CD4-positive, alpha-beta T cell (primary cell): ENCODE measurements at regions of chr20 and their contacts with region 1.

Region 1: GRCh38 chr20:3888622-3889488 is at the start of gene PANK2:
- DNase-seq: peak; percentile 93 to 99 (median 96)
- ATAC-seq: peak; percentile 95
- H3K4me3 ChIP-seq: peak within 1 kb of the TSS; percentile 90
- H3K4me3 Mint-ChIP-seq: peak within 1 kb of the TSS; percentile 98
- H3K27ac ChIP-seq: peak within 1 kb of the TSS; percentile 80 to 85
- H3K27ac Mint-ChIP-seq: peak within 1 kb of the TSS; percentile 94
- H3K4me1 ChIP-seq: peaks cover 38% of the 10 kb centered on the region
- H3K4me1 Mint-ChIP-seq: peaks cover 67% of the 10 kb centered on the region
- H3K27me3 ChIP-seq: no peaks in the 10 kb centered on the region
- H3K27me3 Mint-ChIP-seq: no peaks in the 10 kb centered on the region
- CTCF ChIP-seq: no peak
- total RNA-seq, gene PANK2: 49.0 to 51.1 TPM

Region 2: GRCh38 chr20:3820048-3820900 is 68.6 kb before region 1 on chr20 and contains the start of gene AP5S1:
- CTCF ChIA-PET with region 1: interaction called, 4 read pairs
- POLR2A ChIA-PET with region 1: no interaction called
- intact Hi-C with region 1: loop called in 1 of 2 experiments (anchors 2 kb)
- DNase-seq: peak; percentile 71 to 95 (median 84)
- ATAC-seq: peak; percentile 84
- H3K4me3 ChIP-seq: peak within 1 kb of the TSS; percentile 92
- H3K4me3 Mint-ChIP-seq: peak within 1 kb of the TSS; percentile 94
- H3K27ac ChIP-seq: peak within 1 kb of the TSS; percentile 93 to 99
- H3K27ac Mint-ChIP-seq: peak within 1 kb of the TSS; percentile 99
- H3K4me1 ChIP-seq: peaks cover 54% of the 10 kb centered on the region
- H3K4me1 Mint-ChIP-seq: peaks cover 48% of the 10 kb centered on the region
- H3K27me3 ChIP-seq: no peaks in the 10 kb centered on the region
- H3K27me3 Mint-ChIP-seq: no peaks in the 10 kb centered on the region
- CTCF ChIP-seq: peak; percentile 89
- total RNA-seq, gene AP5S1: 6.0 TPM

Region 3: DNA sequence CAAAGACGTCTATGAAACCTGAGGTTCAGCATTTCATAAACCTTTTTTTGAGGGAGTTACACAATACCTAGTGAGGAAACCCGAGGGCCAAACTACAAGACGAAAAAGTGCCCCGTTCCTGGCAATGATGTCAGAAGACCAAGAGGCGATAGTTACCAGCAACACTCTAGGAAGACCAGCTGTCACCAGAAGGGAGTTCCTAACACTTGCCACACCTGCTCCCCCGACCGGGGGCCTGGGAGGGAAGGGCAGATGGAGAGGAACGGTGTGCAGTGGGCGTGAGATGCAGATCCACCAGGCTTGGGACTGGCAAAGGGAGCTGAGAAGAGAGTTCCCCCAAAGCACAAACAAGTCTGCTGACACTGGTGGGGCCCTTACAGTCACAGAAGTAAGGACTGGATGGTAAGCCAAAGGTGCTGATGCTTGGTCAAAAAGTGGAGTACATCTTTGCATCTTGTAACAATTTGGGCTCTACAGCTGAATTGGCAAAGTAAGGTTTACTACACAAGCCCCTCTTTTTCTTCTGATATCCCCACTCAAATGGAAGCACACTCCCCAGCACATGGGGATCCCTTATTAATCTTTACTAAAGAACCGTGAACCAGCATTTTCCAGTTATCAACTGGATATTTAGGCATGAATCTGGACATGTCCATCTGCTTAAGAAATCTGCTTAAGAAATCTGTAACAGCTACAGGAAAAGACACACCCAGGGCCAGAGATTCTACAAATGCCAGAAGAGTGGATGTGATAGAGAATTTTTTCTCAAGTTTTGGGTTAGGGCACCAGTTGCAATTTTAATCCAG is 38.8 kb after region 1 on chr20:
- CTCF ChIA-PET with region 1: no interaction called
- POLR2A ChIA-PET with region 1: no interaction called
- intact Hi-C with region 1: loop called in 1 of 2 experiments (anchors 2 kb)
- DNase-seq: peak in 2 of 14 experiments; percentile 32 to 34
- ATAC-seq: no peak
- H3K4me3 ChIP-seq: no peak overlapping the region
- H3K4me3 Mint-ChIP-seq: no peak overlapping the region
- H3K27ac ChIP-seq: peak overlapping the region in 1 of 2 donors; percentile 17
- H3K27ac Mint-ChIP-seq: peak overlapping the region; percentile 61
- H3K4me1 ChIP-seq: peaks cover 23% of the 10 kb centered on the region
- H3K4me1 Mint-ChIP-seq: peaks cover 63% of the 10 kb centered on the region
- H3K27me3 ChIP-seq: no peaks in the 10 kb centered on the region
- H3K27me3 Mint-ChIP-seq: no peaks in the 10 kb centered on the region
- CTCF ChIP-seq: no peak

Region 4: GRCh38 chr20:4038047-4038459 is 149.2 kb after region 1 on chr20:
- CTCF ChIA-PET with region 1: no interaction called
- POLR2A ChIA-PET with region 1: no interaction called
- intact Hi-C with region 1: loop called in 1 of 2 experiments (anchors 2 kb)
- DNase-seq: peak; percentile 67 to 96 (median 78)
- ATAC-seq: peak; percentile 100
- H3K4me3 ChIP-seq: peak overlapping the region; percentile 29
- H3K4me3 Mint-ChIP-seq: peak overlapping the region; percentile 74
- H3K27ac ChIP-seq: peak overlapping the region; percentile 37 to 66
- H3K27ac Mint-ChIP-seq: peak overlapping the region; percentile 86
- H3K4me1 ChIP-seq: peaks cover 25% of the 10 kb centered on the region
- H3K4me1 Mint-ChIP-seq: peaks cover 17% of the 10 kb centered on the region
- H3K27me3 ChIP-seq: no peaks in the 10 kb centered on the region
- H3K27me3 Mint-ChIP-seq: no peaks in the 10 kb centered on the region
- CTCF ChIP-seq: no peak

Region 5: GRCh38 chr20:4171538-4172116 is 282.8 kb after region 1 on chr20:
- CTCF ChIA-PET with region 1: no interaction called
- POLR2A ChIA-PET with region 1: no interaction called
- intact Hi-C with region 1: loop called in 1 of 2 experiments (anchors 2 kb)
- DNase-seq: peak in 3 of 14 experiments; percentile 6 to 20 (median 19)
- ATAC-seq: no peak
- H3K4me3 ChIP-seq: peak overlapping the region; percentile 69
- H3K4me3 Mint-ChIP-seq: peak overlapping the region; percentile 76
- H3K27ac ChIP-seq: peak overlapping the region in 1 of 2 donors; percentile 34
- H3K27ac Mint-ChIP-seq: peak overlapping the region; percentile 70
- H3K4me1 ChIP-seq: peaks cover 21% of the 10 kb centered on the region
- H3K4me1 Mint-ChIP-seq: peaks cover 29% of the 10 kb centered on the region
- H3K27me3 ChIP-seq: no peaks in the 10 kb centered on the region
- H3K27me3 Mint-ChIP-seq: no peaks in the 10 kb centered on the region
- CTCF ChIP-seq: no peak

Region 6: DNA sequence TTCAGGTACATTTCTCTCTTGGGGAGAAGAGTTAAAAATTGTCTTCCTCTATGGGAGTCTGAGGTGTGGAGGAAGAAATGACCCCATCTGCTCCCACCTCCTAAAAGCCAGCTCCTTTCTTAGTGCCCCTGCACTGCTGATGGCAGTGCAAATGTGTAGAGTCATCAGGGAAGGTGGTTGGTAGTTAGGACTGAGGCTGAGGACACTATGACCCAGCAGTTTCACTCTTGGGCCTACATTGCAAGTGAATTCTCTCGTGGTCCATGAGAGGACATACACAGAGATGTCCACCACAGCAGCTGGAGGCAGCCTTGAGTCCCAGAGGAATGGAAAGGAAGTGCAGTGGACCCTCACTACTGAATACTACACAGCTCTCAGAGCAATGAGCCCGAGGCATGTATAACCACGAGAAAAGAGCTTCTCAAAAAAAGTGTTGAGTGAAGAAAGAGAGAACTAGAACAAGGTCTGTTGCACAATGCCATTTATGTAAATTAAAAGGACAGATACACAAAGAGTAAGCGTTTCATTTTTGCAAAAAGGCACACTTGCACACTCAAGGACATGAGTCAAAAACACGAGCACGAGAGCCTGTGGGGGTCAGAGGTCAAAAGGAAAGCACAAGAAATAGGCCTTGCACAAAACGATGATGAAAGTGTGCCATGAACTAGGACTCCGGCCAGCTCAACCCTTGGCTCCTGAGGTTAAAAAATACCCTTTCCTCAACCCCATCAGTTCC is 524.6 kb after region 1 on chr20:
- CTCF ChIA-PET with region 1: no interaction called
- POLR2A ChIA-PET with region 1: no interaction called
- intact Hi-C with region 1: no loop called
- DNase-seq: peak in 2 of 14 experiments; percentile 45 to 50
- ATAC-seq: no peak
- H3K4me3 ChIP-seq: no peak overlapping the region
- H3K4me3 Mint-ChIP-seq: no peak overlapping the region
- H3K27ac ChIP-seq: no peak overlapping the region
- H3K27ac Mint-ChIP-seq: no peak overlapping the region
- H3K4me1 ChIP-seq: no peaks in the 10 kb centered on the region
- H3K4me1 Mint-ChIP-seq: no peaks in the 10 kb centered on the region
- H3K27me3 ChIP-seq: no peaks in the 10 kb centered on the region
- H3K27me3 Mint-ChIP-seq: peaks cover 10% of the 10 kb centered on the region
- CTCF ChIP-seq: no peak